Heart right ventricle (tissue), 16 donors: ENCODE measurements at regions of chr10 and their contacts with region 1.

Region 1: DNA sequence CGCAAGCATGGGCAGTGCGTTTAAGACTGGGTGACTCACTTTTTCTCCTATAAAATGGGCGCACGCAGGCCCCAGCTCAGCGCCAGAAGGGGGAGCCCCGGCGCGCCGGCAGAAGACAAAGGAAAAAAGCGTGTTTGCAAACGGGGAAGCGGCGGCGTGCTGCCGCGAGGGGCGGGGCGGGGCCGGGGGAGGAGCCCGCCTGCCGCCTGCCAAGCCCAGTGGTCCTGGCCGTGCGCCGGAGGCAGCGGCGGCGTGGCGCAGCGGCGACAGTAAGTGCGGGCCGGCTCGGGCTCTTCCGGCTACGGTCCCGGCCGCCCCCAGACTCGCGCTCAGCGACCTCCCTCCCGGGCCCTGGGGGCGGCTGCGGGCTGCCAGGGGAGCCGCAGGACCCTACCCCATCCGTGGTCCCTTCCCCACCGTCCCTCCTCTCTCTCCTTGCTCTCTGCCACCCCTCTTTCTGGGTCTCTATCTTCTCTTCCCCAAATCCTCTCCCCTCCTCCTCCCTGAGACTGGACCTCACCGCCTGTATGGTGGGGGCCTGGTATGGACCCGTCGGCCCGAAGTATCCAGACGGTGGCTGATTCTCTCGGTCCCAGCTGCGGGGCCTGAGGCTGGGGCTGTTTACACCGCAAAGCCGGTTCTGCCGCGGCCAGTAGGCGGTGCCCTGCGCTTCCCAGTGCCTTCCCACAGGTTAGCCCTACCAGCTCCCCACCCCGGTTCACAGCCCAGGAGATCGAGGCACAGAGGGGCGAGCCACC is at the start of gene SLC29A3:
- DNase-seq: peak; percentile 74 to 85
- ATAC-seq: peak; percentile 89 to 95 (median 92)
- H3K4me3 ChIP-seq: peak within 1 kb of the TSS; percentile 54 to 84 (median 68)
- H3K27ac ChIP-seq: peak within 1 kb of the TSS in 9 of 10 donors; percentile 17 to 86 (median 68)
- H3K4me1 ChIP-seq: peaks cover 3 to 33% (median 12%) of the 10 kb centered on the region in 9 donors
- H3K27me3 ChIP-seq: no peaks in the 10 kb centered on the region
- CTCF ChIP-seq: peak; percentile 34 to 74 (median 55)
- total RNA-seq, gene SLC29A3: 0.89 to 3.5 (median 1.2) TPM

Region 2: GRCh38 chr10:71191531-71192076 is 127.6 kb before region 1 on chr10:
- intact Hi-C with region 1: no loop called
- DNase-seq: no peak
- ATAC-seq: no peak
- H3K4me3 ChIP-seq: no peak overlapping the region
- H3K27ac ChIP-seq: no peak overlapping the region
- H3K4me1 ChIP-seq: peaks cover 0 to 31% (median 10%) of the 10 kb centered on the region in 9 donors
- H3K27me3 ChIP-seq: peaks cover 0 to 7% (median 0%) of the 10 kb centered on the region in 7 donors
- CTCF ChIP-seq: no peak

Region 3: DNA sequence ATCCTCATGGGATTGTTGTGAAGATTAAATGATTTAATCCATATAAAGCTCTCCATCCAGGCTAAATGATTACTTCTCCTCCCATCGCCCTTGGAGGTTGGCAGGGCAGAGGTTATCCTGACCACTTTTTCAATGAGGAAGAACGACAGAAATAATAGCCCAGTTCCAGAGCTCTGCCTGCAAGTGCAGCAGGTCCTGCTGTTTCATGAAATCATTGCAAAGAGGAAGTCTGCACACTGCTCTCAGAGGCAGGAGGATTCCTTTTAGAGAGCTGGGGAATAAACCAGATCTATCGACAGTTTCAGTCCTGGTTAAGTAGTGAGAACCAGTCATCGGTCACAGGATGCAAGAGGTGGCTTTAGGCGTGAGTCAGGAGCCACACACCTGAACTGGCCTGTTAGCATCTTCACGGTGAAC is 52.5 kb after region 1 on chr10:
- intact Hi-C with region 1: loop called in 5 of 10 experiments (anchors 2 to 10 kb)
- DNase-seq: no peak
- ATAC-seq: peak in 3 of 8 donors; percentile 36 to 51 (median 39)
- H3K4me3 ChIP-seq: no peak overlapping the region
- H3K27ac ChIP-seq: peak overlapping the region in 1 of 10 donors; percentile 83
- H3K4me1 ChIP-seq: peaks cover 0 to 67% (median 3%) of the 10 kb centered on the region in 9 donors
- H3K27me3 ChIP-seq: peaks cover 0 to 12% (median 0%) of the 10 kb centered on the region in 7 donors
- CTCF ChIP-seq: no peak

Region 4: DNA sequence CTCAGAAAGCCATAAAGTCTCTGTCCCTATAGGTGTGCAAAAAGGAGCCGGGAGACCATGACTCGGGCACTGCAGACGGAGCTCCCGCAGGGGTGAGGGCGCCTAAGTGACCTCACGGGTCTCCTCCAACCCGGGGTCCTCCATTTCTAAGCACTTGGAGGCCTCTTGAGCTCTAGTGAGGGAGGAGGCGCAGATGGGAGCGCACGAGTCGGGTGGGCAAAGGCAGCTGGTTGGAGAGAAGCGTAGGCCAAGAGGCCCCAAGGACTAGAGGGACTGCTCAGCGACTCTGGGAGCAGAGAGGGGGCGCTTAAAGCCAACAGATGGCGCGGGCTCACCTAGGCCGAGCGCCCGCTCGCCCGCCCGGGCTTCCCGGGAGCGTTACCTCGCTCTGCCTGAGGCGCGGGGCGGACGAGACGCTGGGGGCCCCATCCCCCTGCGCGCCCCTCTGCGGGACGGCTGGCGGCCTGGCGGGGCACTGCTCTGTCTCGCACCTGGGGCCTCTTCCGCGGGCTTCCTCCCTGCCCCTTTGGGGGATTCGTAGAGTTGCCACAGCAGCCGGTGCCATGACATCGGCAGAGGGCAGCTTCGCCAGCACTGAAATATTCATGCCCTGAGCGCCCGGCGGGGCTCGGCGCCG is 77.0 kb after region 1 on chr10:
- intact Hi-C with region 1: loop called in 1 of 10 experiments (anchors 5 kb)
- DNase-seq: peak; percentile 64 to 66
- ATAC-seq: peak; percentile 91 to 95 (median 92)
- H3K4me3 ChIP-seq: peak overlapping the region; percentile 38 to 70 (median 58)
- H3K27ac ChIP-seq: peak overlapping the region in 3 of 10 donors; percentile 30 to 69 (median 64)
- H3K4me1 ChIP-seq: peaks cover 5 to 27% (median 15%) of the 10 kb centered on the region in 9 donors
- H3K27me3 ChIP-seq: peaks cover 0 to 61% (median 36%) of the 10 kb centered on the region in 7 donors
- CTCF ChIP-seq: peak; percentile 51 to 87 (median 76)

Region 5: DNA sequence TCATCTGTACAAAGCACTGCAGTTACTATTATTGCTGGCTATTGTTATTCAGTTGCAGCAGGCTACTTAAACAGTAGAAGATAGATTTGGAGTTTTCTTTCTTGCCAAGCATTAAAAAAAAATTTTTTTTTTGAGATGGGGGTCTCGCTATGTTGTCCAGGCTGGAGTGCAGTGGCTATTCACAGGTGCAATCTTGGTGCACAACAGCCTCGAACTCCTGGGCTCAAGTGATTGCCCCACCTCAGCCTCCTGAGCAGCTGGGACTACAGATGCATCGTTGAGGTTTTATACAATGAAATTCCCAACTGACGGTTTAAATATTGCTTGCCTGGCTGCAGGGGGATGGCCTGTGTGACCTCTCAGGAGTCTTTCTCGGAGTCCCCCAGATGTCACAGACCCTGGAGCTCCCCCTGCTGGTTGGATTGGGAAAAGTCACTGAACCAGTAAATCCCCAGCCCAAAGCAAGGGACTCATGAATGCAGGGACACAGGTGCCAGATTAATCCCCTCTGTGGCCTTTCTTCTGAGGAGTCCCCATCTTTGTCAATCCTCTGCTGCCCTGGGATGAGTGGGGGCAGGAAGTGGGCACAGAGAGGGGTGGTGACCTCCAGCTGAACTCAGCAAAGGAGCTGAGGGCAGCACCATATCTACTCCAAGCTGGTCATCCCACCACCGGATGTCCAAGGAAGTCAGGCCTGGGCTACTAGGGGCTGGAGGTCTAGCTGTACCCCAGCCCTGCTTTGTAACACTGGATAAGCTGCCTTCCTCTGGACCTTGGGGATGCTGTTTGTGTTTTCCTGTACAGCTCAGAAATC is 250.8 kb after region 1 on chr10:
- intact Hi-C with region 1: loop called in 7 of 10 experiments (anchors 2 to 10 kb)
- DNase-seq: peak; percentile 58 to 77
- ATAC-seq: peak in 7 of 8 donors; percentile 44 to 73 (median 68)
- H3K4me3 ChIP-seq: no peak overlapping the region
- H3K27ac ChIP-seq: no peak overlapping the region
- H3K4me1 ChIP-seq: no peaks in the 10 kb centered on the region
- H3K27me3 ChIP-seq: no peaks in the 10 kb centered on the region
- CTCF ChIP-seq: peak; percentile 74 to 89 (median 87)

Region 6: DNA sequence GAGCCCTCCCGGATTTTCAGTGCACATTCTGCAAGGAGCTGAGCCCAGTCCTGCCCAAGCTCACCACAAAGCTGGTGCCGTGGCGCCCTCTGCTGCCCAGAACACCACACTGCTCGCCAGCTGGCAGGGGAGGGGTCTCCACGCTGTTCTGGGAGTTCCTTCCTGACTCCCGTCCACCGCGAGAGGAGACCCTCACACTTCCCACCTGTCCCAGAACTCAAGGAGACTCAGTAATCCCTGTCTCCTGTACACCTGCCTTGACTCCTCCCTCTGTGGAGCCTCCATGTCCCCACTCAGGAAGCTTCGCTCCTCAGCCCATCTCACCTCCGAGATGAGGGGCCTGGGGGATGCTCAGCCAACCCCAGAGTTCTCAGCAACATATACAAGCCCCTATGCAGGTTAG is 389.1 kb after region 1 on chr10:
- intact Hi-C with region 1: loop called (anchors 5 to 10 kb)
- DNase-seq: peak; percentile 50 to 71
- ATAC-seq: peak; percentile 32 to 57 (median 42)
- H3K4me3 ChIP-seq: no peak overlapping the region
- H3K27ac ChIP-seq: no peak overlapping the region
- H3K4me1 ChIP-seq: peaks cover 3 to 33% (median 28%) of the 10 kb centered on the region in 9 donors
- H3K27me3 ChIP-seq: no peaks in the 10 kb centered on the region
- CTCF ChIP-seq: peak; percentile 64 to 96 (median 90)

Region 7: GRCh38 chr10:71899665-71900412 is 580.6 kb after region 1 on chr10:
- intact Hi-C with region 1: loop called in 3 of 10 experiments (anchors 5 to 10 kb)
- DNase-seq: no peak
- ATAC-seq: peak in 1 of 8 donors; percentile 7
- H3K4me3 ChIP-seq: no peak overlapping the region
- H3K27ac ChIP-seq: no peak overlapping the region
- H3K4me1 ChIP-seq: peaks cover 0 to 14% (median 10%) of the 10 kb centered on the region in 9 donors
- H3K27me3 ChIP-seq: no peaks in the 10 kb centered on the region
- CTCF ChIP-seq: no peak